Ascending aorta (tissue), 2 donors: ENCODE measurements at regions of chr7 and their contacts with region 1.

Region 1: GRCh38 chr7:47818796-47819606 is 129.3 kb downstream of the PKD1L1 start:
- DNase-seq: peak in 1 of 2 donors; percentile 87
- H3K4me3 ChIP-seq: no peak overlapping the region
- H3K27ac ChIP-seq: peak overlapping the region in 1 of 2 donors; percentile 21
- H3K4me1 ChIP-seq: peaks cover 3 to 8% of the 10 kb centered on the region in 2 donors
- H3K27me3 ChIP-seq: no peaks in the 10 kb centered on the region
- CTCF ChIP-seq: peak; percentile 86 to 91 (median 90)

Region 2: DNA sequence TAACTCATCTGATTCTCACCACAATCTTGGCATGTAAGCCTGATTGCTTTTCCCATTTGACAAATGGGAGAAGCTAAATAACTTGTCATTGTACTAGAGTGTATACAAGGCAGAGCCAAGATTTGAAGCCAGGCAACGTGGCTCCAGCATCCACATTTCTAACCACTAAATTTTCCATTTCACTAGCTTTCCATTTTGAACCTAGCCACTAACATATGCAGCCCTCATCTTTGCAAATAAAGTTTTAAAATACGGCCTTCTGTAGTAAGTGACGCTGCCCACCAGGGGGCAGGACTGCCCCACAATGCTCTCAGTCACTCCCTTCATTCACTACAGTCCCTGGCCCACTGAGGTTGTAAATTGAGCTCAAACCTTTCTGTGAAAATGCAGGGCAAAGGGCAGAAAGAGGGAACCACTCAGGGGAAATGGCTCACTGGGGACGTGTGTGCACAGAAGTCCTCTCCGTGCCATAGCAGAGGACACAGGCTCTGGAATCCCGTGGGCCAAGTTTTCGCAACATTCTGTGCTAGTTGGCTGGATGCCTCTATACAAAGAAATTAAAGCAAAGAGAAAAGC is 552.8 kb before region 1 on chr7:
- intact Hi-C with region 1: loop called (anchors 2 kb)
- DNase-seq: peak in 1 of 2 donors; percentile 74
- H3K4me3 ChIP-seq: no peak overlapping the region
- H3K27ac ChIP-seq: peak overlapping the region in 1 of 2 donors; percentile 13
- H3K4me1 ChIP-seq: no peaks in the 10 kb centered on the region
- H3K27me3 ChIP-seq: no peaks in the 10 kb centered on the region
- CTCF ChIP-seq: peak; percentile 86 to 96 (median 90)

Region 3: DNA sequence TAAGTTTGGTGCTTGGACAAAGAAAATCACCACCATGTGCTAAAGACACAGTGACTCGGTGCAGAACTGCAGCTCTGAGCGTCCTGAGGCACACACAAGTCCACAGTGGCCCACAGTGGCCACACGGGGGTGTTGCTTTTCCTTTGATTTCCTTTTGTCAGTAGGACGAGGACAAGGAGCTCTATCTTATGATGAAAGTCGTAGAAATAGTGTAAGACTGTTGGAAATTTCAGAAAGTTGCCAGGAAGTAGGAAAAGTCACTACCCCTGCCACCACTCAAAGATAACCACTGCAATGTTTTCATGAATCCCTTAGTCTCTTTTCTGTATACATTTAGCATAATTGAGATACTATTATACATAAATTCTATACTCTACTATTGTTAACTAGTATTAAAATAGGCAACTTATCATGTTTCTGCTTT is 383.1 kb before region 1 on chr7:
- intact Hi-C with region 1: loop called (anchors 1 kb)
- DNase-seq: peak in 1 of 2 donors; percentile 81
- H3K4me3 ChIP-seq: no peak overlapping the region
- H3K27ac ChIP-seq: no peak overlapping the region
- H3K4me1 ChIP-seq: no peaks in the 10 kb centered on the region
- H3K27me3 ChIP-seq: no peaks in the 10 kb centered on the region
- CTCF ChIP-seq: peak; percentile 60 to 77 (median 67)

Region 4: DNA sequence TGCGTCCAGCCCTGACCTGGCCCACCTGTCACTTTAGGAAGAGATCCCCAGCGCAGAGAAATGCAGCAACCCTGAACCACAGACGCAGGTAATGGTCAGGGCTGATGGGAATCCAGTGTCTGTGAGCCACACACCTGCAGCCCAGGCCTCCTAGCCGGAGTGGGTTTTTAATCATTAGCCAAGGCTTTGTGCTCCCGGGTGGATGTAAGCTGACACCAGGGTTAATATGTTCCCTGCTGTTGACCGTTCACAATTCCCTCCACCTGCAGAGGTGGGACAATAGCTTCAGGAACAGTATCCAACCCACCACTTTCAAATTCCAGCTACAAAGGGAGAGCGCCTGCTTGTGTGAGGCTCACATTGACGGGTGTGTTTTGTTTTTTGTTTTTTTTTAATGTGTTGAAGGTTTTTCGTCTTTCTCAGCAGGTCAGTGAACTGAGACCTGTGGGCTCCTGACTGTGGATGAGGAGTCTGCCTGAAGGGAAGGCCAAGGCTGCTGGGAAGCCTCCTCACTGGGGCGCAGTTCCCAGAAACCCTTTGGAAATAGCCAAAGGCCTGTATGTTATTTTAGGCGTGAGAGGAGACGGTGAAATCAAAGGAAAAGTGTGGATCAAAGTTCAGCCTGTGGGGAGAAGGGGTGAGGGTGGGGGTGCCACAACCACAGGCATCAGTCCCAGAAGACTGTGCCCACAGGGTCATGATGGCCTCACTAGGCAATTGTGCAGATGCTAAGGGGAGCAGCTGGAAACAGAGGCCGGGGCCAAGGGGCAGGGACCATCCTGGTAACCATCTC is 348.2 kb before region 1 on chr7:
- intact Hi-C with region 1: no loop called
- DNase-seq: no peak
- H3K4me3 ChIP-seq: no peak overlapping the region
- H3K27ac ChIP-seq: peak overlapping the region in 1 of 2 donors; percentile 33
- H3K4me1 ChIP-seq: peaks cover 0 to 14% of the 10 kb centered on the region in 2 donors
- H3K27me3 ChIP-seq: no peaks in the 10 kb centered on the region
- CTCF ChIP-seq: no peak

Region 5: DNA sequence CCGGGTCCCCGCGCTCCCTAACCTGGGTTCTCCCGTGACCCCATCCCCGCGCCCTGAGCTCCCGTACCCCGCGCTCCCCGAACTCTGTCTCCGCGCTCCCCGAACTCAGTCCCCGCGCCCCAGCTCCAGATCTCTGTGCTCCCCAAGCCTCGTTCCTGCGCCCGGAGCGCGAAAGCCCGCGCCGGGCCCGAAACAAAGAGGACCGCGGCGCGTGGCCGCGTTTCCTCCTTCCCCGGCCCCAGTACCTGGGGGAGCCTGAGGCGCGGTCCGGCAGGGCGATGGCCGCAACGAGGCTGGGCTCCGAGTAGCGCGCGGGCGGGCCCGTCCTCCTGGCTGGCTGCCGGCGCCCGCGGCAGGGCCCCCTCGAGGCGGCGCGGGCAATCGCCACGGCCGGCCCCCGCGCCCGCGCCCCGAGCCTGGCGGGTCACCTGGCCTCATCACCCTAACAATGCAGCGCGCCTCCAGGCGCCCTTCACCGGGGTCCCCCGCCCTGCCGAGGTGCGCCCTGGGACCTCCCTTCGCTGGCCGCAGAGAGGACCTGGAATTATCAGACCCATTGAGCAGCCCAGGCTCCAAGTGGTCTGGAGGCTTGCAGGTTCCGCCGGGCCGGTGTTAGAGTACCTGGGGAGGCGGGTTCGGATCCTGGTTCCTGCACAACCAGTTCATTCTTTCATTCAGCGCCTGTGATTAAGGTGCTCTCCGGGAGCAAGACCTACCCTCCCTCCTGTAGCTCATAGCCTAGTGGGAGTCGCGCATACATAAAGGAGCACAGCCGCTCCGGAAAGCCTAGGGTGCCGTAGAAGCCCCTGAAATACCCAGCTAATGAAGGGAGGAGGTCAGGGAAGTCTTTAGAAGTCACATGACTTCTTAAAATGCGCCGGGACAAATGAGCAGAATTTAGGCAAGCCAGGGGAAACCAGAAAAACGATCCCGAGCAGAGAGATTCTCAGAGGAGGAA is 236.9 kb before region 1 on chr7 and contains the start of gene TNS3:
- intact Hi-C with region 1: loop called (anchors 5 kb)
- DNase-seq: peak in 1 of 2 donors; percentile 73
- H3K4me3 ChIP-seq: peak within 1 kb of the TSS; percentile 75 to 82
- H3K27ac ChIP-seq: peak within 1 kb of the TSS; percentile 85 to 88
- H3K4me1 ChIP-seq: peaks cover 14 to 58% of the 10 kb centered on the region in 2 donors
- H3K27me3 ChIP-seq: no peaks in the 10 kb centered on the region
- CTCF ChIP-seq: peak in 1 of 3 experiments; percentile 60
- total RNA-seq, gene TNS3: 89.8 TPM

Region 6: GRCh38 chr7:47690902-47691558 is 128.0 kb before region 1 on chr7:
- intact Hi-C with region 1: loop called (anchors 5 kb)
- DNase-seq: no peak
- H3K4me3 ChIP-seq: no peak overlapping the region
- H3K27ac ChIP-seq: peak overlapping the region; percentile 75 to 77
- H3K4me1 ChIP-seq: peaks cover 3 to 28% of the 10 kb centered on the region in 2 donors
- H3K27me3 ChIP-seq: no peaks in the 10 kb centered on the region
- CTCF ChIP-seq: no peak

Region 7: DNA sequence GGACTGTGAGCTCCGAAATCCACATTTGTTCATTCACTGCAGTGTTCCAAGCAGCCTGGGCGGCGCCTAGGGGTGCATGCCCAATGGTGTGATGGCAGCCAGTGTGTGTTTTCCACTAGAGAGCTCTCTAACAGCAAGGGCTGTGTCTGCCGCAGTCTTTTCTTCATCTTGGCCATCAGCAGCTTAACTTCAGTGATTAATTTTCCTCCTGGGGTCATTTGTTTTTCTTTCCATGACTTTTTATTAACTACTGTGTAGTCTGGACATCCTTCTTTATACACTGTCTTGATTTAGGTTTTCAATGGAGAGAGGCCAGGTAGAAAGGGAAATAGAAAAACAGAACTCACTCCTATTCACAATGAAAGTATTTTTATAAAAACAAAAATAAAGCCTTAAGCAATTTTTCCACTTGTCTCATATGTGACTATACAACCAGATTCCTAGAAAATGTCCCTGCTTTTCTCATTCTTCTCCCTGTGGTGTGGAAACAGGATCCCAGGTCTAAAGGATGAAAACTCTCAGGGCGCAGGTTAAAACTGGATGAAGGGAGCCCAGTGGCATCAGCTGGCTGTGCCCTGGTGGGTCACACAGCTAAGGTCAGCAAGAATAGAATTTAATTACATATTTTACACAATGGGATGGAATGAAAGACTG is 47.5 kb before region 1 on chr7:
- intact Hi-C with region 1: loop called (anchors 5 kb)
- DNase-seq: peak in 1 of 2 donors; percentile 94
- H3K4me3 ChIP-seq: no peak overlapping the region
- H3K27ac ChIP-seq: peak overlapping the region; percentile 76 to 79
- H3K4me1 ChIP-seq: peaks cover 3 to 28% of the 10 kb centered on the region in 2 donors
- H3K27me3 ChIP-seq: no peaks in the 10 kb centered on the region
- CTCF ChIP-seq: peak in 2 of 3 experiments; percentile 32 to 37